CD8-positive, alpha-beta memory T cell (primary cell): ENCODE measurements at regions of chr14 and their contacts with region 1.

Region 1: GRCh38 chr14:87944987-87945604 is 47.9 kb downstream of the GALC start:
- DNase-seq: peak in 2 of 5 donors; percentile 39 to 44
- H3K4me3 ChIP-seq: no peak overlapping the region
- H3K4me3 Mint-ChIP-seq: no peak overlapping the region
- H3K27ac ChIP-seq: no peak overlapping the region
- H3K27ac Mint-ChIP-seq: peak overlapping the region in 3 of 8 donors; percentile 8 to 82 (median 66)
- H3K4me1 ChIP-seq: peaks cover 7% of the 10 kb centered on the region
- H3K4me1 Mint-ChIP-seq: peaks cover 15 to 33% (median 26%) of the 10 kb centered on the region in 3 donors
- H3K27me3 ChIP-seq: no peaks in the 10 kb centered on the region
- H3K27me3 Mint-ChIP-seq: no peaks in the 10 kb centered on the region

Region 2: DNA sequence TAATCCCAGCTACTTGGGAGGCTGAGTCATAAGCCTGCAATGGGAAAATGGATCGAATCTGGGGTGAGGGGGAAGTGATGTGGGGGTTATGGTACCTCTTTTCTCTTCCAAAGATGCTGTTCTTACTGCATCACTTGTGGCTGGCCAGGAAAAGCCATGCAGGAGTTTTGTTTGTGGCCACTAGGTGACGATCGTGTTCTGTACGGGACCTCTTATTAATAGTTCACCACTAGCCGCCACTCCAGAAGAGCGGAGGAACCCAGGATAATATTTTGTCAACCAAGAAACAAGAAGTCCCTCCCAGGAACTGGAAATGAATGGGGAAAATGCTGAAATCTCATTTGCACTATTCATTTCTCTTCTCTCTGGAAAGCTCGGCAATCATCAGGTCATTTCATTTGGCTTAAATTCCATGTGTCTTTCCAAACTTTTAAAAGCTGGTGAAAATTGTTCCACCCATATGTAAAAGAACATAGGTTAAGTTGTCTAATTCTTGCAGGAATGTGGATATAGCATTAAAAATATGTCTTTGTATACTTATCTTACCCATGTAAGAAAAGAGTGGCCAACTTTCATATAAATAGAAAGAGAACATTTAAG is 68.8 kb after region 1 on chr14:
- CTCF ChIA-PET with region 1: interaction called, 13 read pairs
- POLR2A ChIA-PET with region 1: no interaction called
- DNase-seq: peak in 4 of 5 donors; percentile 20 to 60 (median 33)
- H3K4me3 ChIP-seq: no peak overlapping the region
- H3K4me3 Mint-ChIP-seq: peak overlapping the region; percentile 24 to 74 (median 61)
- H3K27ac ChIP-seq: no peak overlapping the region
- H3K27ac Mint-ChIP-seq: peak overlapping the region; percentile 64 to 99 (median 92)
- H3K4me1 ChIP-seq: peaks cover 52% of the 10 kb centered on the region
- H3K4me1 Mint-ChIP-seq: peaks cover 86 to 92% (median 91%) of the 10 kb centered on the region in 3 donors
- H3K27me3 ChIP-seq: no peaks in the 10 kb centered on the region
- H3K27me3 Mint-ChIP-seq: no peaks in the 10 kb centered on the region

Region 3: DNA sequence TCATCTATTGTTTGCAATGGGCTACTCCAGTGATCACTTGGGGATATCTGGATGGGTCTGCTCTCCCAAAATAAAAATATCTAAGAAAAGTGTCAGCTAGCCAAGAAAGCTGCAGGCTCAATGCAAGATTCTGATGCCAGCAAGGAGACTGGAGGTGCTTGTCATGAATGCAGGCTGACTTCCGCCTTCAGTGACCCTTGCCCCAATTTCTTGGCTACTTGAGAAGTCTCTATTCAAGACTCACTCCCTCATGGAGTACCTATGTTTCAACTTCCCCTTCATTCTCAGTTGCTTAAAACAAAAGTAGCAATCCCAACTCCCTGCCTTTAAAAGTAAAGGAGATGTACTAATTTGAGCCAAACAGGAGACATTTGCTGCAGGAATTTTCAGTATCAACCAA is 183.7 kb after region 1 on chr14:
- CTCF ChIA-PET with region 1: no interaction called
- POLR2A ChIA-PET with region 1: no interaction called
- DNase-seq: no peak
- H3K4me3 ChIP-seq: no peak overlapping the region
- H3K4me3 Mint-ChIP-seq: peak overlapping the region in 2 of 7 donors; percentile 12 to 26
- H3K27ac ChIP-seq: no peak overlapping the region
- H3K27ac Mint-ChIP-seq: peak overlapping the region in 1 of 8 donors; percentile 38
- H3K4me1 ChIP-seq: peaks cover 10% of the 10 kb centered on the region
- H3K4me1 Mint-ChIP-seq: peaks cover 34 to 47% (median 40%) of the 10 kb centered on the region in 3 donors
- H3K27me3 ChIP-seq: no peaks in the 10 kb centered on the region
- H3K27me3 Mint-ChIP-seq: peaks cover 7 to 14% of the 10 kb centered on the region in 2 donors

Region 4: GRCh38 chr14:88189417-88190191 is 244.5 kb after region 1 on chr14:
- CTCF ChIA-PET with region 1: interaction called, 12 read pairs
- POLR2A ChIA-PET with region 1: no interaction called
- DNase-seq: peak; percentile 7 to 49 (median 15)
- H3K4me3 ChIP-seq: no peak overlapping the region
- H3K4me3 Mint-ChIP-seq: peak overlapping the region in 5 of 7 donors; percentile 63 to 78 (median 68)
- H3K27ac ChIP-seq: no peak overlapping the region
- H3K27ac Mint-ChIP-seq: peak overlapping the region in 2 of 8 donors; percentile 37 to 55
- H3K4me1 ChIP-seq: no peaks in the 10 kb centered on the region
- H3K4me1 Mint-ChIP-seq: peaks cover 6 to 9% (median 7%) of the 10 kb centered on the region in 3 donors
- H3K27me3 ChIP-seq: peaks cover 4% of the 10 kb centered on the region
- H3K27me3 Mint-ChIP-seq: peaks cover 18 to 33% of the 10 kb centered on the region in 2 donors